Calu3 (cell line): ENCODE measurements at regions of chr20 and their contacts with region 1.

Region 1: GRCh38 chr20:64164123-64164836 is at the start of gene MYT1:
- DNase-seq: no peak
- H3K4me3 Mint-ChIP-seq: no peak within 1 kb of the TSS
- H3K27ac Mint-ChIP-seq: no peak within 1 kb of the TSS
- H3K4me1 Mint-ChIP-seq: peaks cover 9% of the 10 kb centered on the region
- H3K27me3 Mint-ChIP-seq: peaks cover 100% of the 10 kb centered on the region
- CTCF ChIP-seq: no peak
- total RNA-seq, gene MYT1: 0.45 TPM in 1 of 2 replicates, not detected in the other

Region 2: GRCh38 chr20:64101731-64102621 is 62.3 kb before region 1 on chr20:
- CTCF ChIA-PET with region 1: no interaction called
- intact Hi-C with region 1: loop called (anchors 2 kb)
- DNase-seq: peak; percentile 80
- H3K4me3 Mint-ChIP-seq: peak overlapping the region; percentile 15
- H3K27ac Mint-ChIP-seq: no peak overlapping the region
- H3K4me1 Mint-ChIP-seq: no peaks in the 10 kb centered on the region
- H3K27me3 Mint-ChIP-seq: peaks cover 99% of the 10 kb centered on the region
- CTCF ChIP-seq: peak; percentile 95

Region 3: DNA sequence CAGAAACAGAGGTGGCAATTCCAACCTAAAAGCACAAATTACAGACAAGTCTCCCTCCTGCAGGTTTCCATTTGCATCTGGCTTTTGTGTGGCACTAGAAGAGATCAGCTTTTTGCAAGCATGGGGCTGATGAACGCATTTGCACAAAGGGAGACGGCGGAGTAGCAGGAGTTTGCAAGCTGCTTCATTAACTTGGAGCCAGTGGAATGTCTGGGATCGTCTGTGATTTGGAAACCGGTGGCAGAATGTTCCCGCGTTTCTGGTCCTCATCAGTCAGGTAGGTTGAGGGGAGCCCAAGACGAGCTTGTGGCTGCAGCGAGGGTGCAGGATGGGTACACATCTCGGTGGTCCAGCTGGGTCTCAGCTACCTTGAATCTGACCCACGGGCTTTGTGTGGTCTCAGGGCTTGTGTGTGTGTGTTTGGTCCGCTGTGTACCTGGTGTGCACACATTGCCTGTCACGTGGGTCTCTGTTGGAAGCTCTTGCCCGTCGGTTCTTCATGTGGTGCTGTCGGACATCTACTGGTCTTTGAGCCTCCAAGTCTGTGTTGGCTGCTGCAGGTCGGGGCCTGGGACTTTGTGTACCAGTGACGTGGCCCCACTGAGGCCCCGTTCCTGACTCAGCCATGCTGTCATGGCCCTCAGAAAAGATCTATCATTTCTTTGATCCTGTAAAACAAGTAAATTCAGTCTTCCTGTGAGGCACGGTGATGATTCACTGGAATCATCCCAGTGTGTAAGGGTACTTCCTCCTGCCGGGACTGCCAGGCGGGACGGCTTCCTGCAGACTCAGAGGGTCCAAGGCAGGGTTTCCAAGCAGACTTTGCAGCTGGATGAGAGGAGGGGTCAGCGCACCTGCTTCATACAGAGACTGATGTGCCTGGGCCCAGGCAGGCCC is 12.4 kb before region 1 on chr20:
- CTCF ChIA-PET with region 1: no interaction called
- intact Hi-C with region 1: no loop called
- DNase-seq: peak; percentile 64
- H3K4me3 Mint-ChIP-seq: no peak overlapping the region
- H3K27ac Mint-ChIP-seq: no peak overlapping the region
- H3K4me1 Mint-ChIP-seq: peaks cover 33% of the 10 kb centered on the region
- H3K27me3 Mint-ChIP-seq: peaks cover 48% of the 10 kb centered on the region
- CTCF ChIP-seq: no peak